ENCODE measurements at regions of chr4 and their contacts with region 1.

Region 1: GRCh38 chr4:101727238-101727637 is 63.3 kb upstream of the BANK1 start:
- DNase-seq: no peak
- ATAC-seq: no peak
- H3K4me3 ChIP-seq: no peak overlapping the region
- H3K27ac ChIP-seq: no peak overlapping the region
- H3K4me1 ChIP-seq: no peaks in the 10 kb centered on the region
- H3K27me3 ChIP-seq: no peaks in the 10 kb centered on the region
- CTCF ChIP-seq: no peak

Region 2: DNA sequence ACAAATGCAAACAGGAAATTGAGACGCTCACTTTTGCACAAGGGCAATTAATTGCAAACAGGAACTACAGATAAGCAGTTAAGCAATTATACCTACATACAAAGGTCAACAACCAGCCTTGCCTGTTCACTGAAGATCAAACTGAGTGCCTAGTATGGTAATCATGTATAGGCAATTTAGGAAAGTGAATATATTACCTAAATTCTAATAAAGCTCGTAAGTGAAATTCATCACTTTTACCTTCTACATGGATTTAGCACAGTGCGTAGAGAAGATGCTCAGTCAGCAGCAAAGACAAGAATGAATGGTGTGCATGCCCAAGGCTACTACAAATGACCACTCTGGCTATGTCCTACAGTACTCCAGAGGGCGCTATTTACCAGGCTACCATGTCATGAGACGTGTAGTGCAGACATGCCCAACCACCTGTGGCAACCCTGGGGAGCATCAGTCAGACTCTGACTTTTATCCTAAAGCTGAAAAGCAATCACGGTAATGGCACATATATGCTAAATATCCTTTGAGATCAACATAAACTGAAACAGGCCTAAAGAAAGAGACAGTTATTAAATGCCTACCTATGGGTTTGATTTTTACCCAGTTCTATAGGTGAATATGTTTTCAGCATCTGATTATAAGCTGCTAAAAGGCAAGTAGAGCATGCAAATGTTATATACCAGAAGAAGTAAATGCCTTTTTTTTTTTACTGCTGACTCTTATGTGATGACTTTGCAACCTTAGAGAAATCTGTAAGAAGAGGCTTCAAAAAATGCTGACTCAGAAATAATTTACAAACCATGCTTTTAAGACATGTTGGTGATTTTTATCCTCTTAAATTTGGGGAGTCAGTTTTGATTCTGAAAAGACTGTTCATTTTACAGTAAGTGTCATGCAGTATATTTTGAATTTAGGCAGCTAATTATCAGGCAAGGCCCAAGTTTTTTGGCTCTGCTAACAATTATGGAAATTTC is 557.9 kb before region 1 on chr4:
- intact Hi-C with region 1: loop called in 1 of 2 experiments (anchors 5 kb)
- DNase-seq: peak in 2 of 4 donors; percentile 47 to 49
- ATAC-seq: peak; percentile 99
- H3K4me3 ChIP-seq: no peak overlapping the region
- H3K27ac ChIP-seq: peak overlapping the region in 1 of 2 donors; percentile 39
- H3K4me1 ChIP-seq: peaks cover 0 to 29% of the 10 kb centered on the region in 2 donors
- H3K27me3 ChIP-seq: no peaks in the 10 kb centered on the region
- CTCF ChIP-seq: peak; percentile 58 to 74

Region 3: GRCh38 chr4:102042843-102043802 is 315.9 kb after region 1 on chr4:
- intact Hi-C with region 1: no loop called
- DNase-seq: no peak
- ATAC-seq: no peak
- H3K4me3 ChIP-seq: no peak overlapping the region
- H3K27ac ChIP-seq: no peak overlapping the region
- H3K4me1 ChIP-seq: no peaks in the 10 kb centered on the region
- H3K27me3 ChIP-seq: no peaks in the 10 kb centered on the region
- CTCF ChIP-seq: no peak

Region 4: GRCh38 chr4:102061133-102061532 is 333.9 kb after region 1 on chr4:
- intact Hi-C with region 1: no loop called
- DNase-seq: no peak
- ATAC-seq: no peak
- H3K4me3 ChIP-seq: no peak overlapping the region
- H3K27ac ChIP-seq: no peak overlapping the region
- H3K4me1 ChIP-seq: no peaks in the 10 kb centered on the region
- H3K27me3 ChIP-seq: no peaks in the 10 kb centered on the region
- CTCF ChIP-seq: no peak

Measured in left lung (tissue), 14 donors.